Naive thymus-derived CD4-positive, alpha-beta T cell (primary cell): ENCODE measurements at regions of chr1 and their contacts with region 1.

Region 1: GRCh38 chr1:89632657-89633247 is at the start of gene LRRC8C:
- DNase-seq: peak; percentile 86 to 96 (median 92)
- ATAC-seq: peak; percentile 89
- H3K4me3 ChIP-seq: peak within 1 kb of the TSS; percentile 74
- H3K4me3 Mint-ChIP-seq: peak within 1 kb of the TSS; percentile 92 to 99 (median 98)
- H3K27ac ChIP-seq: peak within 1 kb of the TSS; percentile 93
- H3K27ac Mint-ChIP-seq: peak within 1 kb of the TSS; percentile 93 to 99 (median 98)
- H3K4me1 ChIP-seq: peaks cover 53 to 65% of the 10 kb centered on the region in 2 donors
- H3K4me1 Mint-ChIP-seq: peaks cover 61 to 85% (median 81%) of the 10 kb centered on the region in 7 donors
- H3K27me3 ChIP-seq: no peaks in the 10 kb centered on the region
- H3K27me3 Mint-ChIP-seq: no peaks in the 10 kb centered on the region
- total RNA-seq, gene LRRC8C: 27.1 to 50.5 (median 46.6) TPM

Region 2: DNA sequence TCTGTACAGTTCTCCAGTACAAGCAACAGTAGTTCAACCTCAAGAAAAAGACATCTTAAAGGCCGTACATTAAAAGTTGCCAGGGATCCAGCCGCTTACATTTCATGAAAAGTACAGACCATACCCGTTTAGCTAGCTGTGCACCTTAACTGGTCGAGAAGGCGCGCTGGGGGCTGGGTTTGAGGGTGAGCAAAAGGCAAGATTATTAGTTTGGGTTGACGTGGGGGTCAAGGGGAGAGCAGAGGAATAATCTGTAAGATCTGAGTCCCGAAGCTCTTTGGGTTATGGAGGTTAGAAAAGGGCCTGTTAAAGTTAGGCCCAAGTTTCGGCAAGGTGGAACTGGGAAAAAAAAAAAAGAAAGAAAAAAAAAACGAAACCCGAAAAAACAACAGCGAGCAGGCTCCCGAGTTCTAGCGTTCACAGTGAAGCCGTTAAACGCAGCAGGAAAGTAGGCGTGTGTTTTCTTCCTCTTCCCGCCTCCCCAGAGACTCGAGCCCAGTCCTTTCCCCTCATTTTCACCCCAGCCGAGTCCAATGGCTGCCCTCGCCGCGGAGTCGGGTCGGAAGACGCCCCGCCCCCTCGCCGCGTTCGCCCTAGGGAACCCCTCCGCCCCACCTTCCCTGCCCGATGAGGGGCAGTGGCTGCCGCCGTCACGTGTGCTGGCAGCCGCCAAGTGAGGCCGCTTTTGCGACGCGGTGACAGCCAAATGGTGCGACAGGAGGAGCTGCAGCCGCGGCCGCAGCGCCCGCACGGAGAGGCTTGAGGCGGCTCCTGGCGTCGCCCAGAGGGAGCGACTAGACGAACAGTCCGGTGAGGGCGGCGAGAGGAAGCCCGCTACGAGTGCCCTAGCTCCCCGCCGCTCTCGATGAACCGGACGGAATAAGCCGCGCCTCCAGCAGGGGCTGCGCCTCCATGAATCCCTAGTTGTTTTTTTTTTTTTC is 948.9 kb before region 1 on chr1 and contains the start of gene PKN2:
- CTCF ChIA-PET with region 1: no interaction called
- POLR2A ChIA-PET with region 1: no interaction called
- intact Hi-C with region 1: loop called in 1 of 2 experiments (anchors 10 kb)
- DNase-seq: peak; percentile 94 to 98 (median 97)
- ATAC-seq: peak; percentile 96
- H3K4me3 ChIP-seq: peak within 1 kb of the TSS; percentile 91
- H3K4me3 Mint-ChIP-seq: peak within 1 kb of the TSS; percentile 89 to 99 (median 97)
- H3K27ac ChIP-seq: peak within 1 kb of the TSS; percentile 89
- H3K27ac Mint-ChIP-seq: peak within 1 kb of the TSS; percentile 96 to 100 (median 97)
- H3K4me1 ChIP-seq: peaks cover 18 to 19% of the 10 kb centered on the region in 2 donors
- H3K4me1 Mint-ChIP-seq: peaks cover 18 to 53% (median 36%) of the 10 kb centered on the region in 7 donors
- H3K27me3 ChIP-seq: no peaks in the 10 kb centered on the region
- H3K27me3 Mint-ChIP-seq: peaks cover 0 to 12% (median 0%) of the 10 kb centered on the region in 5 donors
- total RNA-seq, gene PKN2: 32.1 to 53.8 (median 46.9) TPM

Region 3: GRCh38 chr1:89524369-89525168 is 108.2 kb before region 1 on chr1 and contains the start of gene LRRC8B:
- CTCF ChIA-PET with region 1: no interaction called
- POLR2A ChIA-PET with region 1: interaction called, 19 read pairs
- intact Hi-C with region 1: loop called (anchors 1 kb)
- DNase-seq: peak; percentile 80 to 91 (median 86)
- ATAC-seq: peak; percentile 94
- H3K4me3 ChIP-seq: peak within 1 kb of the TSS; percentile 93
- H3K4me3 Mint-ChIP-seq: peak within 1 kb of the TSS in 1 of 10 donors; percentile 76
- H3K27ac ChIP-seq: peak within 1 kb of the TSS; percentile 92
- H3K27ac Mint-ChIP-seq: peak within 1 kb of the TSS in 8 of 9 donors; percentile 89 to 97 (median 94)
- H3K4me1 ChIP-seq: peaks cover 7 to 34% of the 10 kb centered on the region in 2 donors
- H3K4me1 Mint-ChIP-seq: peaks cover 11 to 31% (median 21%) of the 10 kb centered on the region in 7 donors
- H3K27me3 ChIP-seq: no peaks in the 10 kb centered on the region
- H3K27me3 Mint-ChIP-seq: no peaks in the 10 kb centered on the region
- total RNA-seq, gene LRRC8B: 8.8 to 23.0 (median 17.1) TPM

Region 4: GRCh38 chr1:89615676-89616598 is 16.8 kb before region 1 on chr1:
- CTCF ChIA-PET with region 1: interaction called, 86 read pairs
- POLR2A ChIA-PET with region 1: interaction called, 834 read pairs
- intact Hi-C with region 1: loop called in 1 of 2 experiments (anchors 1 kb)
- DNase-seq: no peak
- ATAC-seq: peak; percentile 54
- H3K4me3 ChIP-seq: no peak overlapping the region
- H3K4me3 Mint-ChIP-seq: peak overlapping the region in 2 of 10 donors; percentile 23 to 24
- H3K27ac ChIP-seq: no peak overlapping the region
- H3K27ac Mint-ChIP-seq: peak overlapping the region in 8 of 9 donors; percentile 15 to 86 (median 74)
- H3K4me1 ChIP-seq: peaks cover 30 to 42% of the 10 kb centered on the region in 2 donors
- H3K4me1 Mint-ChIP-seq: peaks cover 38 to 95% (median 84%) of the 10 kb centered on the region in 7 donors
- H3K27me3 ChIP-seq: no peaks in the 10 kb centered on the region
- H3K27me3 Mint-ChIP-seq: no peaks in the 10 kb centered on the region

Region 5: GRCh38 chr1:89719502-89720306 is 87.0 kb after region 1 on chr1:
- CTCF ChIA-PET with region 1: interaction called, 3 read pairs
- POLR2A ChIA-PET with region 1: interaction called, 5 read pairs
- intact Hi-C with region 1: loop called (anchors 1 kb)
- DNase-seq: no peak
- ATAC-seq: peak; percentile 77
- H3K4me3 ChIP-seq: no peak overlapping the region
- H3K4me3 Mint-ChIP-seq: peak overlapping the region in 9 of 10 donors; percentile 1 to 82 (median 48)
- H3K27ac ChIP-seq: peak overlapping the region; percentile 10
- H3K27ac Mint-ChIP-seq: peak overlapping the region; percentile 1 to 97 (median 66)
- H3K4me1 ChIP-seq: peaks cover 27 to 57% of the 10 kb centered on the region in 2 donors
- H3K4me1 Mint-ChIP-seq: peaks cover 34 to 82% (median 75%) of the 10 kb centered on the region in 7 donors
- H3K27me3 ChIP-seq: no peaks in the 10 kb centered on the region
- H3K27me3 Mint-ChIP-seq: no peaks in the 10 kb centered on the region

Region 6: GRCh38 chr1:89855413-89856123 is 222.8 kb after region 1 on chr1:
- CTCF ChIA-PET with region 1: no interaction called
- POLR2A ChIA-PET with region 1: no interaction called
- intact Hi-C with region 1: loop called in 1 of 2 experiments (anchors 5 kb)
- DNase-seq: peak in 7 of 9 donors; percentile 45 to 80 (median 67)
- ATAC-seq: peak; percentile 91
- H3K4me3 ChIP-seq: peak overlapping the region; percentile 2
- H3K4me3 Mint-ChIP-seq: peak overlapping the region in 5 of 10 donors; percentile 35 to 87 (median 53)
- H3K27ac ChIP-seq: peak overlapping the region; percentile 72
- H3K27ac Mint-ChIP-seq: no peak overlapping the region
- H3K4me1 ChIP-seq: peaks cover 21 to 29% of the 10 kb centered on the region in 2 donors
- H3K4me1 Mint-ChIP-seq: peaks cover 6 to 31% (median 8%) of the 10 kb centered on the region in 7 donors
- H3K27me3 ChIP-seq: no peaks in the 10 kb centered on the region
- H3K27me3 Mint-ChIP-seq: no peaks in the 10 kb centered on the region

Region 7: DNA sequence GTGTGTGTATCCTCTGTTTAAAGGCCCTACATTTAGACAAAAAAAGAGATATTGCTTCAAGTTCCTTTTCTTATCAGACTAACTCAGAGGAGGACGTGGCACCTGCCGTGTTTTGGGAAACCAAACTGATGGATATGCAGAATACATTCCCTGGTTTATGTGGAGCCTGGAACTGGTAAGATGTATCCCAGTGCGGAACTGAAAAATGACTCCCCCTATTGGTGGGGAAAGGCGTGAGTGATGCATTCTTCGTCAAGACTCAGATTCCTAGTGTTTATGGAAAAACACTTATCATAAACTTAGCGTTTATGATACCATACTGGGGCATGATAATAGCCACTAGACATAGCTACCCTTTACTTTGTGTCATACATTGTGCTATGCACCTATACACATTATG is 516.3 kb after region 1 on chr1:
- CTCF ChIA-PET with region 1: no interaction called
- POLR2A ChIA-PET with region 1: no interaction called
- intact Hi-C with region 1: no loop called
- DNase-seq: no peak
- ATAC-seq: no peak
- H3K4me3 ChIP-seq: no peak overlapping the region
- H3K4me3 Mint-ChIP-seq: no peak overlapping the region
- H3K27ac ChIP-seq: no peak overlapping the region
- H3K27ac Mint-ChIP-seq: no peak overlapping the region
- H3K4me1 ChIP-seq: no peaks in the 10 kb centered on the region
- H3K4me1 Mint-ChIP-seq: no peaks in the 10 kb centered on the region
- H3K27me3 ChIP-seq: no peaks in the 10 kb centered on the region
- H3K27me3 Mint-ChIP-seq: peaks cover 0 to 38% (median 16%) of the 10 kb centered on the region in 5 donors